ENCODE measurements at regions of chr1 and their contacts with region 1.

Region 1: GRCh38 chr1:145912128-145912641 is 2.3 kb upstream of the ITGA10 start:
- DNase-seq: no peak
- ATAC-seq: no peak
- H3K4me3 ChIP-seq: no peak overlapping the region
- H3K27ac ChIP-seq: peak overlapping the region; percentile 4
- H3K4me1 ChIP-seq: peaks cover 10% of the 10 kb centered on the region
- H3K27me3 ChIP-seq: no peaks in the 10 kb centered on the region
- CTCF ChIP-seq: no peak

Region 2: GRCh38 chr1:145823565-145824498 is 88.4 kb before region 1 on chr1 and contains the starts of genes POLR3C and RNF115:
- intact Hi-C with region 1: no loop called
- DNase-seq: peak; percentile 94 to 97
- ATAC-seq: peak; percentile 94 to 96 (median 96)
- H3K4me3 ChIP-seq: peak within 1 kb of the TSS; percentile 91
- H3K27ac ChIP-seq: peak within 1 kb of the TSS; percentile 96
- H3K4me1 ChIP-seq: peaks cover 18% of the 10 kb centered on the region
- H3K27me3 ChIP-seq: no peaks in the 10 kb centered on the region
- CTCF ChIP-seq: no peak
- total RNA-seq, gene POLR3C: 13.2 to 21.8 (median 18.9) TPM
- total RNA-seq, gene RNF115: 44.5 to 81.6 (median 62.8) TPM

Region 3: DNA sequence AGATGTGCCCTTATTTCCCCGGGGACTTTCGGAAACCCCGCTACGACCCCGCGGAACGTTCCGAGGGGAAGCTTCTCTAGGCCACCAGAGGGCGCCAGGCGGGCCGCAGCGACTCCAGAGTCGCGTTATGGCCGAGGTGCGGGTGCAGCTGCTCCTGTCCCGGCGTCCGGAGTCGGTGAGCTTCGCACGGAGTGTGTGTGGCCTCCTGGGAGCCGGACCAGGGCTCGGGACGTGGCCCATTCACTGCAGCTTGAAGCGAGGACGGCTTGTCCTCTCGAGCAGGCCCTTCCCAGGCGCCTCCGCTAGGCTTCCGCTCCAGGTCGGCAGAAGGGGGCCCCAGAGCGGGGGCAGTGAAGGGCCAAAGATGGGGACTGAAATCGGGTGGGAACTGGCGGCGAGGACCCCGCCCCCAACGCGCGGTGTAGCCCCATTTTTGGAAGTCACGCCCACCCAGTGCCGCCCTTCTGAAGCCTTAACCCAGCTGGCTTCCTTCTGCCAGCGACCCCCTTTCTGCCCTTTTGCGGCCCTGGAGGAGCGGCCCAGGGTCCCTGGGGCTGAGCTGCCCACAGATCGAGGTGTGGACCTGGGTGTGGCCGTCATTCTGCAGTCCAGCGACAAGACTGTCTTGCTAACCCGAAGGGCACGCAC is 66.5 kb before region 1 on chr1 and contains the start of gene NUDT17:
- intact Hi-C with region 1: loop called in 1 of 2 experiments (anchors 5 kb)
- DNase-seq: peak; percentile 84 to 92
- ATAC-seq: peak; percentile 87 to 94 (median 90)
- H3K4me3 ChIP-seq: peak within 1 kb of the TSS; percentile 78
- H3K27ac ChIP-seq: peak within 1 kb of the TSS; percentile 78
- H3K4me1 ChIP-seq: peaks cover 10% of the 10 kb centered on the region
- H3K27me3 ChIP-seq: no peaks in the 10 kb centered on the region
- CTCF ChIP-seq: peak; percentile 92
- total RNA-seq, gene NUDT17: 1.4 to 2.9 (median 1.7) TPM